ENCODE measurements at regions of chr6 and their contacts with region 1.

Region 1: GRCh38 chr6:25278914-25279747 is at the start of gene CARMIL1:
- DNase-seq: peak; percentile 92
- H3K4me3 Mint-ChIP-seq: peak within 1 kb of the TSS; percentile 96
- H3K27ac Mint-ChIP-seq: peak within 1 kb of the TSS; percentile 93
- H3K4me1 Mint-ChIP-seq: peaks cover 31% of the 10 kb centered on the region
- H3K27me3 Mint-ChIP-seq: no peaks in the 10 kb centered on the region
- CTCF ChIP-seq: peak; percentile 83
- total RNA-seq, gene CARMIL1: 23.0 and 25.2 TPM in 2 replicates

Region 2: DNA sequence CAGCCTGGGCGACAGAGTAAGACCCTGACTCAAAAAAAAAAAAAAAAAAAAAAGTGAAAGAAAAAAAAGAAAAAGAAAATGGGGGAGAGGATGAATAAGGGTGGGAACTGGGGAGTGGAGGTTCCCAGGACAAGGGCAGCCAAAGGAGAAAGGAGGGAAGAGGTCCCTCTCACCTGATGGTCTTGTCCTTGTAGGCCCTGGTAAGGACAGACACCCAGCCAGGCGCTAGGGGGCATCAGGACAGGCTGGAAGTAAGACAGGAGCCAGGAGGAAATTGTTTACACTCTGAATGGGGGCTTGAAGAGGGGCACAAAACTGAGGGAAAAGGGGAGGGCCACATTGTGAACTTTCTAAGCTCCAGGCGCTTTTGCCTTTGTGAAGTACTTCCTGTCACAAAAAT is 786.7 kb before region 1 on chr6:
- CTCF ChIA-PET with region 1: no interaction called
- POLR2A ChIA-PET with region 1: no interaction called
- intact Hi-C with region 1: no loop called
- DNase-seq: no peak
- H3K4me3 Mint-ChIP-seq: no peak overlapping the region
- H3K27ac Mint-ChIP-seq: no peak overlapping the region
- H3K4me1 Mint-ChIP-seq: no peaks in the 10 kb centered on the region
- H3K27me3 Mint-ChIP-seq: no peaks in the 10 kb centered on the region
- CTCF ChIP-seq: no peak

Region 3: DNA sequence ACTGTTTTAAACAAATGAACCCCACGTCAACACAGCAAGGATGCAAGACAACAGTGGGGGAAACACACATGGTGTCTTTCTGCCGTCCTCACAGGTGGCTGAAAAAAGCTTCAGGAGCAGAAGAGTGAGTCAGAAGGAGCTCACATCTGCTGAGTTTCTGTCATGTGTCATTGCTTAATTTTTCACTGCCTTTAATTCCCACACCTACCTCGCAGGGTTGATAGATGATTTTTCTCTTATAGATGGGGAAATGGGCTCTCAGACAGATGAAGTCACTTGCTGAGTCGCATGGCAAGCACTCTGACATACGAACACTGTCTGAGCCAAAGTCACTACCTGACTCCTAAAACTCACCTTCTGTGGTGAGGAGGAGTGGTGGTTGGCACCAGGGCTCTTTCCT is 28.3 kb before region 1 on chr6:
- CTCF ChIA-PET with region 1: interaction called, 10 read pairs
- POLR2A ChIA-PET with region 1: interaction called, 7 read pairs
- intact Hi-C with region 1: no loop called
- DNase-seq: peak; percentile 81
- H3K4me3 Mint-ChIP-seq: no peak overlapping the region
- H3K27ac Mint-ChIP-seq: no peak overlapping the region
- H3K4me1 Mint-ChIP-seq: peaks cover 25% of the 10 kb centered on the region
- H3K27me3 Mint-ChIP-seq: no peaks in the 10 kb centered on the region
- CTCF ChIP-seq: no peak

Region 4: GRCh38 chr6:25312703-25313501 is 33.8 kb after region 1 on chr6:
- CTCF ChIA-PET with region 1: interaction called, 37 read pairs
- POLR2A ChIA-PET with region 1: interaction called, 64 read pairs
- intact Hi-C with region 1: loop called (anchors 1 kb)
- DNase-seq: peak; percentile 70
- H3K4me3 Mint-ChIP-seq: peak overlapping the region; percentile 69
- H3K27ac Mint-ChIP-seq: peak overlapping the region; percentile 90
- H3K4me1 Mint-ChIP-seq: peaks cover 32% of the 10 kb centered on the region
- H3K27me3 Mint-ChIP-seq: no peaks in the 10 kb centered on the region
- CTCF ChIP-seq: no peak

Region 5: DNA sequence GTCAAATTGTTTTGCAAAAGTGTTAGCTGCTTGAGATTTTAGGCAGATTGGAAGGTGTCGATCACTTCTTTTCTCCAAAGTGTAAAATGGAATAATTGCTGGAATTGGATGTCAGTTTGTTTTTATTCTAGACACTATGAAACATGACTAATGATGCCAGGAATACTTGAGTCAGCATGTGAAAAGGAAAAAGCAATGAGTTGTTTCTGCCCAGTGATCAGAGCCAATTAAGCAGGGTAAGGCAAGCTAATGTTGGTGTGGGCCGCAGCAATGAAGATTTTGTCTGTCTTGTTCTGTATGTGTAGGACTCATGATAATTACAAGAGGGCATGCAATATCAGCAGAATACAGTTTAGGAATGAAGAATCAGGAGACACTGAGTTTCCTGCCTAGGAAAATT is 110.3 kb after region 1 on chr6:
- CTCF ChIA-PET with region 1: interaction called, 10 read pairs
- POLR2A ChIA-PET with region 1: interaction called, 8 read pairs
- intact Hi-C with region 1: no loop called
- DNase-seq: peak; percentile 71
- H3K4me3 Mint-ChIP-seq: no peak overlapping the region
- H3K27ac Mint-ChIP-seq: peak overlapping the region; percentile 0
- H3K4me1 Mint-ChIP-seq: peaks cover 16% of the 10 kb centered on the region
- H3K27me3 Mint-ChIP-seq: no peaks in the 10 kb centered on the region
- CTCF ChIP-seq: no peak

Region 6: GRCh38 chr6:25504661-25505060 is 225.5 kb after region 1 on chr6:
- CTCF ChIA-PET with region 1: interaction called, 11 read pairs
- POLR2A ChIA-PET with region 1: no interaction called
- intact Hi-C with region 1: no loop called
- DNase-seq: no peak
- H3K4me3 Mint-ChIP-seq: no peak overlapping the region
- H3K27ac Mint-ChIP-seq: no peak overlapping the region
- H3K4me1 Mint-ChIP-seq: no peaks in the 10 kb centered on the region
- H3K27me3 Mint-ChIP-seq: no peaks in the 10 kb centered on the region
- CTCF ChIP-seq: no peak

Region 7: DNA sequence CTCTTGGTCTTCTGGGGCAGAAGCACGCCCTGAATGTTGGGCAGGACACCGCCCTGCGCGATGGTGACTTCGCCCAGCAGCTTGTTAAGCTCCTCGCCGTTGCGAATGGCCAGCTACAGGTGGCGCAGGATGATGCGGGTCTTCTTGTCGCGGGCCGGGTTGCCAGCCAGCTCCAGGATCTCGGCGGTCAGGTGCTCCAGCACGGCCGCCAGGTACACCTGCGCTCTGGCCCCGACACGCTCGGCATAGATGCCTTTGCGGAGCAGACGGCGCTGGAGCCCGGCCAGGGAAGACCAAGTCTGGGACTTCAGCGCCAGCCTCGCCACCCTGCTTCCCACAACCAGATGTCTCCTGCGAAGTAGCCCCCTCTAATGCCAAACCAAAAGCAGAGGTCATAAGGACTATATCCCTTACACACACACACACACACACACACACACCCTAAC is 602.9 kb after region 1 on chr6:
- CTCF ChIA-PET with region 1: no interaction called
- POLR2A ChIA-PET with region 1: no interaction called
- intact Hi-C with region 1: no loop called
- DNase-seq: no peak
- H3K4me3 Mint-ChIP-seq: no peak overlapping the region
- H3K27ac Mint-ChIP-seq: no peak overlapping the region
- H3K4me1 Mint-ChIP-seq: peaks cover 23% of the 10 kb centered on the region
- H3K27me3 Mint-ChIP-seq: no peaks in the 10 kb centered on the region
- CTCF ChIP-seq: no peak